H1 (cell line): ENCODE measurements at regions of chr19 and their contacts with region 1.

Region 1: DNA sequence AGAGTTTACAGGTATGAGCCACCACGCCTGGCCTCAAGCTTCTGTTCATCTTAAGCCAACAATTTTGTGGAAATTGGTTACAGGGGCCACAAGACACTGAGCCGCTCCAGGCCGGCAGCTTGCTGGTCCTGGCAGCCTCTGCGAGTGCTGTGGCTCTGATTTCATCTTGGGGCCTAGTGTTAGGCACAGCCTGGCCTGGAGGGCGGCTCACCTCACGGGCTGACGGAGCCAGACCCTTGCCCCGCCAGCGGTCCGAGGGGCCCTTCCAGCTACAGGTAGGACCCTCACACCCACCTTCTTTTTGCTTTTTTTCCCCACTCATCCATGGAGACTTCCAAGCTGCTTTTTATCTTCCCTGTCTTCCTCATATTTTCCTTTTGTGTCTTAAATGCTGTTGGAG is 8.6 kb downstream of the ZNF544 start:
- DNase-seq: no peak
- H3K4me3 ChIP-seq: no peak overlapping the region
- H3K27ac ChIP-seq: no peak overlapping the region
- H3K4me1 ChIP-seq: no peaks in the 10 kb centered on the region
- H3K27me3 ChIP-seq: no peaks in the 10 kb centered on the region
- CTCF ChIP-seq: no peak
- EP300 ChIP-seq: no peak
- POLR2A ChIP-seq: no peak
- RAD21 ChIP-seq: no peak

Region 2: DNA sequence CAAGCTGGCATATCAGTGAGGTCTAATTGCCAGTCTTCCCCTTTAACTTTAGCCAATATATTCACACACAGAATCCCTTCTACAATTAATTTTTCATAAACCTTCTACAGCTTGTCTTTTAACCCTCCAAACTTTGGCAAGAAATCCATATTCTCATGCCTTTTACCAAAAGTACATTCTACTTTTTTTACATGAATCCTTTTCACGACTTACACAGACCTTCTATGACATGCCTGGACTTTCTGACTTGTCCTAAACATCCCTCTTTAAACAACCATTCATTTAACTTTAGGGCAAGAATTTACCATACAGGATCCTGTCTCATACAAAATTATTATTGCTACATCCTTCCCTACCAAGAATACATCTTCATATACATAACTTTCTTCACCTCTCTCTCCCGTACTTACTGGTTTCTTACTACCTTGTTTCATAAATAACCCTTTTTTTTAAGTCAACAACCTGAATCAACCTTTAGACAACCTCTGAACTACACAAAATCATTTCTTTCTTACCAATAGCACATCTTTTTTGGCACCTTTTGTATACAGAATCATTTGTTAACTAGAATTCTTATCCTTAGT is 14.9 kb after region 1 on chr19:
- CTCF ChIA-PET with region 1: no interaction called
- POLR2A ChIA-PET with region 1: interaction called, 22 read pairs
- DNase-seq: no peak
- H3K4me3 ChIP-seq: peak overlapping the region in 1 of 4 experiments; percentile 10; a peak in 1 of 8 replicates
- H3K27ac ChIP-seq: no peak overlapping the region
- H3K4me1 ChIP-seq: no peaks in the 10 kb centered on the region
- H3K27me3 ChIP-seq: no peaks in the 10 kb centered on the region
- CTCF ChIP-seq: no peak
- EP300 ChIP-seq: no peak
- POLR2A ChIP-seq: no peak
- RAD21 ChIP-seq: no peak